Esophagus muscularis mucosa (tissue), 4 donors: ENCODE measurements at regions of chr6 and their contacts with region 1.

Region 1: GRCh38 chr6:35583893-35584688 is 71.4 kb upstream of the TULP1 start:
- DNase-seq: no peak
- H3K4me3 ChIP-seq: no peak overlapping the region
- H3K27ac ChIP-seq: peak overlapping the region; percentile 84 to 98 (median 87)
- H3K4me1 ChIP-seq: peaks cover 31 to 84% (median 63%) of the 10 kb centered on the region in 4 donors
- H3K27me3 ChIP-seq: no peaks in the 10 kb centered on the region
- CTCF ChIP-seq: peak; percentile 74 to 91 (median 82)
- EP300 ChIP-seq: no peak
- POLR2A ChIP-seq: no peak

Region 2: DNA sequence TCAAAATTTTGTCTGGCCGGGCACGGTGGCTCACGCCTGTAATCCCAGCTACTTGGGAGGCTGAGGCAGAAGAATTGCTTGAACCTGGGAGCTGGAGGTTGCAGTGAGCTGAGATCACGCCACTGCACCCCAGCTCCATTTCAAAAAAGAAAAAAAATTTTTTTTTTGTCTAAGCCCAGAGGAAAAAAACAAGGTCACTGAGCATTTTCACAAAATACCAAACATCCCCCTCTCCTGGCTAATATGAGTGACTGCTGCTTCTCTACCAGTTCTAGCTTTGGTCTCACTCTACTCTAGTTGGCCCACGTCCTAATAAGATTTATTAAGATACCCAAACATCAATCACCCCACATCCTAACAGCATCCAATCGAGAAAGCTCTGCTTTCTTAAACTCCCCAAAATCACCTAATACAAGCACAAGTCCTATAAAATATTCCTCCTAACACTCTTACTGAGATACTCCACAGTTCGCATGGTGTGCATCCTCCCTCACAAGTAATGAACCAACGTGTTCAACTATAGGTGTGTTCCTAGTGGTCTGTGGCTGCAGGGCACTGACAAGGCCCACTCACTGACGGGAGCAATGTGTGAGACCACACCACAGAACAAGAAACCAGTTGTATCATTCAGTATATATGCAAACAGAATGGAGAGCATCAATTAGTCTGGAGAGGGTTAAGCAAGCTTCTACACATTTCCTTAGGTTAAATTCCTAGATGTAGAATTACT is 40.4 kb after region 1 on chr6:
- intact Hi-C with region 1: loop called (anchors 5 kb)
- DNase-seq: no peak
- H3K4me3 ChIP-seq: no peak overlapping the region
- H3K27ac ChIP-seq: peak overlapping the region in 3 of 4 donors; percentile 5 to 35 (median 10)
- H3K4me1 ChIP-seq: peaks cover 0 to 66% (median 26%) of the 10 kb centered on the region in 4 donors
- H3K27me3 ChIP-seq: no peaks in the 10 kb centered on the region
- CTCF ChIP-seq: peak in 1 of 3 experiments; percentile 19
- EP300 ChIP-seq: no peak
- POLR2A ChIP-seq: no peak

Region 3: GRCh38 chr6:35678021-35678654 is 94.0 kb after region 1 on chr6:
- intact Hi-C with region 1: loop called (anchors 5 kb)
- DNase-seq: no peak
- H3K4me3 ChIP-seq: peak overlapping the region in 1 of 4 donors; percentile 13
- H3K27ac ChIP-seq: no peak overlapping the region
- H3K4me1 ChIP-seq: peaks cover 57 to 100% (median 95%) of the 10 kb centered on the region in 4 donors
- H3K27me3 ChIP-seq: no peaks in the 10 kb centered on the region
- CTCF ChIP-seq: no peak
- EP300 ChIP-seq: no peak
- POLR2A ChIP-seq: no peak

Region 4: DNA sequence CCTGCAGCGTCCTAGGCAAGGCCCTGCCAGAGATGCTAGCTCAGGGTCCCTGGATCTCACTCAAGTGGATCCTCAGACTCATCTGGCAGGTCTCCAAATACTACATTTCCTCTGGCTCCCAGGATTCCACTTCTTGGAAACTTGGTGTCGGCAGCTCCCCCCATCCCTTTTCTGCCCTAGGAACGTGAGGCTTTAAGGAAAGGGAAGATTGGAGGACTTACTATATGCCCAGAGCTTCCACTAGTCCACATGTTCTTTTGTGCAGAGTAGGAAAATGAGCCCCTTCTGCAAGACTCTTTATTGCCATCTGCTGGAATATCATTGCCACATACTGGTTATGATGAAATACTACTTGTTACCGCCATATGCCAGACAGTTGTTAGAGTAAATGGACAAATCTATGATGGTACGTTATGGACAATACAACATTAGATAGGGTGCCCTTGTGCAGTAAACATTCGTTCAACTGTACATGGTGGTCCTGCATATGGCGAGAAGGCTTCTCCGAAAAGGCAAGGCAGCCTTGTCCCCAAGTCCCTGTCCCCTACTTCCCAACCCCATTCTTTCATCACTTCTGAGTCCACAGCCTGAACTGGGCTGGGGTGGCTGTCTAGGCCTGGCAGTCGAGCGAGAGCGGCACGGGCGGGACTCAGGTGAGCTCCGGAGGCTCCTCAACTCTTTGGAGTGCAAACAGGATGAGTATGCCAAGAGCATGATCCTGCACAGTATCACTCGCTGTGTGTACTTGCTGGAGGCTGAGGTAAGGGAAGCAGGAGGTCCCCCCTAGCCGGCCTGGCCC is 153.5 kb after region 1 on chr6:
- intact Hi-C with region 1: loop called (anchors 2 kb)
- DNase-seq: no peak
- H3K4me3 ChIP-seq: no peak overlapping the region
- H3K27ac ChIP-seq: peak overlapping the region in 1 of 4 donors; percentile 54
- H3K4me1 ChIP-seq: peaks cover 26 to 56% (median 49%) of the 10 kb centered on the region in 4 donors
- H3K27me3 ChIP-seq: no peaks in the 10 kb centered on the region
- CTCF ChIP-seq: peak; percentile 90 to 96 (median 92)
- EP300 ChIP-seq: no peak
- POLR2A ChIP-seq: no peak

Region 5: DNA sequence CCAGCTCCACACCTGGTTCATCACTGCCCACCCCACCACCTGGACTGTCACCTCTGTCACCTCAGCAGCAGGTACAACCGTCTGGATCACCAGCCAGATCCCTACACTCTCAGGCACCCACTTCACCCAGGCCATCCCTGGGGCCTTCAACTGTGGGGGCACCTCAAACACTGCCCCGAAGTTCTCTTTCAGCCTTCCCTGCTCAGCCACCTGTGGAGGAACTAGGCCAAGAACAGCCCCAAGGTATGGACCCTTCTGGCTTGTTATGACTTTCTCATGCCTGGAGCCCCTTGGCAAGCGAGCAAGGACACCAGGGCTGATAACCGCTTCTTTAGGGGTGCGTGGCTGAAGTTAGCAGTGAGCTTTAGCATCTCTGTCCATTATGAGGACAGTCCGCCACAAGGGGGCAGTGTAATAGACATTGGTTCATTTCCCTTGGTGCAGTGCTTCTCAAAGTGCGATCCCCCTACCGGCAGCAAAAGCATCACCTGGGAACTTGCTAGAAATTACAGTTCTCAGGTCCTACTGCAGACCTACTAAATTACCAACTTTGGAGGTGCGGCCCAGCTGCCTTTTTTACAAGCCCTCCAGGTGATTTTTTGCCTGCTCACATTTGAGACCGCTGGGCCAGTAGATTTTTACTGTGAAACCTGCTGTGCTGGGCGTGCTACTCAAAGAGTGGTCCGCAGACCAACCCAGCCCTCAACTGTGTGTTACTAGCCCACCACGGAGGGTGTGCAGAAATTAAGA is 718.3 kb after region 1 on chr6:
- intact Hi-C with region 1: no loop called
- DNase-seq: peak; percentile 97
- H3K4me3 ChIP-seq: no peak overlapping the region
- H3K27ac ChIP-seq: no peak overlapping the region
- H3K4me1 ChIP-seq: peaks cover 0 to 14% (median 6%) of the 10 kb centered on the region in 4 donors
- H3K27me3 ChIP-seq: peaks cover 0 to 13% (median 0%) of the 10 kb centered on the region in 4 donors
- CTCF ChIP-seq: peak; percentile 75 to 86 (median 85)
- EP300 ChIP-seq: no peak
- POLR2A ChIP-seq: no peak